Mucosa of descending colon (tissue), 3 donors: ENCODE measurements at regions of chr2 and their contacts with region 1.

Region 1: DNA sequence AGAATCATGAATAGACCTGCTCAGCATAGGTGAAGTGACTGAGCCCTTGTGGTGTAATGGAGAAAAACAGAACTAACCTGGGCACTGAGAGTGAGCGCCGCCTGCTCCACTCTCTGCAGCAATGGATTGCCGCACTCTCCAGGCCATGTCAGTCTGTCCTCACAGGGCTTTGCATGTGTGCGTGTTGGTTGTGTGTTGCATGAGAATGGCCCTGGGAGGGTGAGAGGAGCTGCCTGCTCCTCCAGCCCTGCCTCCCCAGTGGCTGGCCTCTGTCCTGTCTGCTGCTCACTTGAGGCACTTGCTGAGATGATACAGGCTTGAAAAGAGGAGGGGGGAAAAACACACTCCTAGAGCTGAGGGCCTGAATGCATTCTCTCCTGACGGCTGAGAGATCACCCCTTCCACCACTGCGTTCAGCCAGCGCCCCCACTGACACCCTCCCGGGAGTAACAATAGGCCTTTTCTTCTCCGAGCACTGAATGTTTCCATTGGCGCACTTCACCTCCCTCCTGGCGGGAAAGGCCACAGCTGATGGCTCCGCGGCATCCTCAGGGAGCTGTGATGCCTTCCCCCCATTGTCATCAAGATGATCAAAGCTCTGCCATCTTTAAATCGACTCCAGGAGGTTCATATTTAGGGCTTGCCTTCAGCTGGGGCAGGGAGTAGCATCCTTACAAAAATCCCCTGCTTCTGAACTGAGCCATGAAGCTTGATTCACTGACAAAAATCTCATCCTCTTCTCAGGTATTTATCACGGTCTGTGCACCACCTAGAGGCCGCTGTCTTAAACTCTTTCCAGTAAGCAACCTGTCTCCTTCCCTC is 49.9 kb upstream of the DAPL1 start:
- DNase-seq: peak in 1 of 3 donors; percentile 72
- ATAC-seq: peak; percentile 51
- H3K4me3 ChIP-seq: no peak overlapping the region
- H3K4me1 ChIP-seq: no peaks in the 10 kb centered on the region
- CTCF ChIP-seq: no peak

Region 2: GRCh38 chr2:158456309-158457066 is 288.8 kb before region 1 on chr2 and contains the starts of genes CCDC148 and PKP4:
- intact Hi-C with region 1: loop called in 1 of 2 experiments (anchors 10 kb)
- DNase-seq: peak; percentile 89 to 92 (median 91)
- ATAC-seq: peak; percentile 90
- H3K4me3 ChIP-seq: peak within 1 kb of the TSS; percentile 87
- H3K4me1 ChIP-seq: peaks cover 12% of the 10 kb centered on the region
- CTCF ChIP-seq: no peak
- total RNA-seq, gene CCDC148: 0.20 to 0.38 TPM in 2 of 3 donors, not detected in the other
- total RNA-seq, gene PKP4: 41.6 to 59.1 (median 51.1) TPM

Region 3: DNA sequence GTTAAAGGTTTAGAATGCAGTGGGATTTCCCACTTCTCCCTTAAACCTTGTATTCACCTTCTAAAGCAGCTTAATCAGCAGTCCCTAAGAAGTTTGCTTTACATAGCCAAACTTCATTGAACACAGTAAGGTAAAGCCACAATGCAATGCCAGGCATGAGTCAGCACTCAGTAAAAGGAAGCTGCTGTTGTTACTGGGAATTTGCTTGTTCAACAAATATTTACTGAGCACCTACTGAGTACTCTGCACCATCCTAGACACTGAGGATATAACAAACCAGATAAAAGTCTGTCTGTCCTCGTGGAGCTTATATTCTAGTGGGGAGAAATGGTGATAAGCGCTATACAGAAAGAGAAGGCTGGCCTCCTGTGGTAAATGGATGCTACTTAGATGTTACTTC is 125.8 kb before region 1 on chr2:
- intact Hi-C with region 1: no loop called
- DNase-seq: no peak
- ATAC-seq: peak; percentile 85
- H3K4me3 ChIP-seq: no peak overlapping the region
- H3K4me1 ChIP-seq: no peaks in the 10 kb centered on the region
- CTCF ChIP-seq: no peak